CD4-positive, alpha-beta T cell (primary cell): ENCODE measurements at regions of chr6 and their contacts with region 1.

Region 1: GRCh38 chr6:142885182-142885867 is 59.7 kb downstream of the HIVEP2 start:
- DNase-seq: peak in 10 of 14 experiments; percentile 17 to 93 (median 48)
- ATAC-seq: peak; percentile 85
- H3K4me3 ChIP-seq: peak overlapping the region; percentile 45
- H3K4me3 Mint-ChIP-seq: peak overlapping the region; percentile 95
- H3K27ac ChIP-seq: peak overlapping the region; percentile 75 to 81
- H3K27ac Mint-ChIP-seq: peak overlapping the region; percentile 91
- H3K4me1 ChIP-seq: peaks cover 43% of the 10 kb centered on the region
- H3K4me1 Mint-ChIP-seq: peaks cover 93% of the 10 kb centered on the region
- H3K27me3 ChIP-seq: no peaks in the 10 kb centered on the region
- H3K27me3 Mint-ChIP-seq: no peaks in the 10 kb centered on the region
- CTCF ChIP-seq: no peak

Region 2: DNA sequence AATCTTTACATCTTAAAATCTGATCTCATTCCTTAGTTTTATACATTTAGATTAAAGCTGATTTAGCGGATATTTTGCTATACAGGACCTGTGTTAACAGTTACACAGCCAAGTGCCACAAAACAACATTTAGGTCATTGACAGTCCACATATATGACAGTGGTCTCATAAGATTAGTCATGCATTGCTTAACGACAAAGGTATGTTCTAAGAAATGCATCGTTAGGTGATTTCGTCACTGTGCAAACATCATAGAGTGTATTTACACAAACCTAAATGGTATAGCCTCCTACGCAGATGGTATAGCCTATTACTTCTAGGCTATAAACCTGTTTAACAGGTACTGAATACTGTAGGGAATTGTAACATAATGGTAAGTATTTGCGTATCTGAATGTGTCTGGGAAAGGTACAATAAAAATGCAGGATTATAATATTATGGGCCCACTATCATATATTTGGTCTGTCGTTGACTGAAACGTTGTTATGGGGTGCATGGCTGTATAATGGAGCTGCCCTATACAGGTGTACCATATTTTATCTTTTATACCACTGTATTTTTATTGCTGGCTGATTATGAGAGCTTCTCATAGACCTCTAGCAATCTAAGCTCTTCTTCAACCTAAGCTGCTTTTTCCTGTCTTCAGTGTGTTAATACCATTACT is 561.8 kb before region 1 on chr6:
- CTCF ChIA-PET with region 1: no interaction called
- POLR2A ChIA-PET with region 1: no interaction called
- intact Hi-C with region 1: no loop called
- DNase-seq: no peak
- ATAC-seq: no peak
- H3K4me3 ChIP-seq: no peak overlapping the region
- H3K4me3 Mint-ChIP-seq: no peak overlapping the region
- H3K27ac ChIP-seq: no peak overlapping the region
- H3K27ac Mint-ChIP-seq: no peak overlapping the region
- H3K4me1 ChIP-seq: no peaks in the 10 kb centered on the region
- H3K4me1 Mint-ChIP-seq: no peaks in the 10 kb centered on the region
- H3K27me3 ChIP-seq: no peaks in the 10 kb centered on the region
- H3K27me3 Mint-ChIP-seq: peaks cover 5% of the 10 kb centered on the region
- CTCF ChIP-seq: no peak

Region 3: DNA sequence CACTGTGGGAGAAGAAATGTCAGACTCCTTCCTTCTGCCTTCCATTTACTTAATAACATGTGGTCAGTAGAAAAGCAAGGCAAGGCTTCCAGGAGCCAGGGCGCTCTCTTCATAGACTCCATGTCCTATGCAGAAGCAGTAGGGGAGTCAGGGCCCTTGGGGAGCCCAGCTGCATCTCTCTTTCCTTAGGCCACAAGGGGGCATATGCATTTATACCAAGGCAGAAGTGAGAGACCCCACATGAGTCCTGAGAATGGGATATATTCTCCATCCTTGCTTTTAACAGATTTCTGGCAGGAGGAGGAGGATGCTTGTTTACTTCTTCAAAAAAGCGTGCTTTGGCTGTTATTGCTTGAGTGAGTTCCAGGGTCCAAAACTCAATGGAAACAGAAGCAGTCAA is 138.8 kb before region 1 on chr6:
- CTCF ChIA-PET with region 1: no interaction called
- POLR2A ChIA-PET with region 1: no interaction called
- intact Hi-C with region 1: loop called in 1 of 2 experiments (anchors 2 kb)
- DNase-seq: peak in 11 of 14 experiments; percentile 7 to 67 (median 15)
- ATAC-seq: peak; percentile 55
- H3K4me3 ChIP-seq: no peak overlapping the region
- H3K4me3 Mint-ChIP-seq: no peak overlapping the region
- H3K27ac ChIP-seq: no peak overlapping the region
- H3K27ac Mint-ChIP-seq: no peak overlapping the region
- H3K4me1 ChIP-seq: peaks cover 6% of the 10 kb centered on the region
- H3K4me1 Mint-ChIP-seq: peaks cover 28% of the 10 kb centered on the region
- H3K27me3 ChIP-seq: no peaks in the 10 kb centered on the region
- H3K27me3 Mint-ChIP-seq: no peaks in the 10 kb centered on the region
- CTCF ChIP-seq: peak; percentile 56

Region 4: GRCh38 chr6:142838821-142839685 is 46.3 kb before region 1 on chr6:
- CTCF ChIA-PET with region 1: interaction called, 10 read pairs
- POLR2A ChIA-PET with region 1: interaction called, 54 read pairs
- intact Hi-C with region 1: loop called in 1 of 2 experiments (anchors 2 kb)
- DNase-seq: peak in 2 of 14 experiments; percentile 28 to 49
- ATAC-seq: no peak
- H3K4me3 ChIP-seq: no peak overlapping the region
- H3K4me3 Mint-ChIP-seq: peak overlapping the region; percentile 65
- H3K27ac ChIP-seq: peak overlapping the region; percentile 40 to 47
- H3K27ac Mint-ChIP-seq: peak overlapping the region; percentile 80
- H3K4me1 ChIP-seq: peaks cover 15% of the 10 kb centered on the region
- H3K4me1 Mint-ChIP-seq: peaks cover 85% of the 10 kb centered on the region
- H3K27me3 ChIP-seq: no peaks in the 10 kb centered on the region
- H3K27me3 Mint-ChIP-seq: no peaks in the 10 kb centered on the region
- CTCF ChIP-seq: no peak

Region 5: DNA sequence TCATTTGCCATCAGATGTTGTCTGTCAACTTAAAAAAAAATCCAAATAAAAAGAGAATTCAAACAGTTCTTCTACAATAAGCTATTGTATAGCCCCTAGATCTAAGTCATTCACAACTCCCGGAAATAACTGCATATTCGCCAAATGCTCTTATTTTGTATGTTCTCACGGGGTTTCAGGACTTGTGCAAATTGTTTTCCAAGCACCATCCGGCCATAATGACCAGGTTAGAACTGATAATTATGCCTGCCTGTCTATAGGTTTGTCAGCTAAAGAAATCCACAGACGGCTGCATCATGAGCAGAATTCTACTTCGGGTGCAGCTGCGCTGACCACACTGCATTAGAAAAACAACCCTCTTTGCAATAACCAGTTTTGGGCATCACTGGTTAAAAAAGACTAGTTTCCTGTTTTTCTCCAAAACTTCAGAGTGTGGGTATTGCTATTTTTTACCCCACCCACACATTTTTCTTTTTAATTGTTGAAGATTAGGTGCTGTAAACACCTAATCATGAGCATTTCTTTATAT is 28.0 kb before region 1 on chr6:
- CTCF ChIA-PET with region 1: interaction called, 4 read pairs
- POLR2A ChIA-PET with region 1: interaction called, 137 read pairs
- intact Hi-C with region 1: loop called in 1 of 2 experiments (anchors 1 kb)
- DNase-seq: peak in 11 of 14 experiments; percentile 25 to 65 (median 37)
- ATAC-seq: peak; percentile 40
- H3K4me3 ChIP-seq: peak overlapping the region; percentile 46
- H3K4me3 Mint-ChIP-seq: peak overlapping the region; percentile 82
- H3K27ac ChIP-seq: peak overlapping the region; percentile 88 to 99
- H3K27ac Mint-ChIP-seq: peak overlapping the region; percentile 94
- H3K4me1 ChIP-seq: peaks cover 69% of the 10 kb centered on the region
- H3K4me1 Mint-ChIP-seq: peaks cover 93% of the 10 kb centered on the region
- H3K27me3 ChIP-seq: no peaks in the 10 kb centered on the region
- H3K27me3 Mint-ChIP-seq: no peaks in the 10 kb centered on the region
- CTCF ChIP-seq: no peak

Region 6: GRCh38 chr6:142913511-142914047 is 28.3 kb after region 1 on chr6:
- CTCF ChIA-PET with region 1: no interaction called
- POLR2A ChIA-PET with region 1: interaction called, 5 read pairs
- intact Hi-C with region 1: loop called in 1 of 2 experiments (anchors 2 kb)
- DNase-seq: peak; percentile 51 to 91 (median 64)
- ATAC-seq: peak; percentile 93
- H3K4me3 ChIP-seq: peak overlapping the region; percentile 41
- H3K4me3 Mint-ChIP-seq: peak overlapping the region; percentile 88
- H3K27ac ChIP-seq: peak overlapping the region; percentile 88 to 90
- H3K27ac Mint-ChIP-seq: peak overlapping the region; percentile 96
- H3K4me1 ChIP-seq: peaks cover 63% of the 10 kb centered on the region
- H3K4me1 Mint-ChIP-seq: peaks cover 89% of the 10 kb centered on the region
- H3K27me3 ChIP-seq: no peaks in the 10 kb centered on the region
- H3K27me3 Mint-ChIP-seq: no peaks in the 10 kb centered on the region
- CTCF ChIP-seq: peak; percentile 42

Region 7: GRCh38 chr6:143026696-143027449 is 141.5 kb after region 1 on chr6:
- CTCF ChIA-PET with region 1: no interaction called
- POLR2A ChIA-PET with region 1: no interaction called
- intact Hi-C with region 1: loop called in 1 of 2 experiments (anchors 10 kb)
- DNase-seq: peak; percentile 18 to 72 (median 40)
- ATAC-seq: peak; percentile 60
- H3K4me3 ChIP-seq: no peak overlapping the region
- H3K4me3 Mint-ChIP-seq: no peak overlapping the region
- H3K27ac ChIP-seq: no peak overlapping the region
- H3K27ac Mint-ChIP-seq: no peak overlapping the region
- H3K4me1 ChIP-seq: no peaks in the 10 kb centered on the region
- H3K4me1 Mint-ChIP-seq: no peaks in the 10 kb centered on the region
- H3K27me3 ChIP-seq: no peaks in the 10 kb centered on the region
- H3K27me3 Mint-ChIP-seq: no peaks in the 10 kb centered on the region
- CTCF ChIP-seq: peak; percentile 62